Esophagus muscularis mucosa (tissue), 4 donors: ENCODE measurements at regions of chr11 and their contacts with region 1.

Region 1: DNA sequence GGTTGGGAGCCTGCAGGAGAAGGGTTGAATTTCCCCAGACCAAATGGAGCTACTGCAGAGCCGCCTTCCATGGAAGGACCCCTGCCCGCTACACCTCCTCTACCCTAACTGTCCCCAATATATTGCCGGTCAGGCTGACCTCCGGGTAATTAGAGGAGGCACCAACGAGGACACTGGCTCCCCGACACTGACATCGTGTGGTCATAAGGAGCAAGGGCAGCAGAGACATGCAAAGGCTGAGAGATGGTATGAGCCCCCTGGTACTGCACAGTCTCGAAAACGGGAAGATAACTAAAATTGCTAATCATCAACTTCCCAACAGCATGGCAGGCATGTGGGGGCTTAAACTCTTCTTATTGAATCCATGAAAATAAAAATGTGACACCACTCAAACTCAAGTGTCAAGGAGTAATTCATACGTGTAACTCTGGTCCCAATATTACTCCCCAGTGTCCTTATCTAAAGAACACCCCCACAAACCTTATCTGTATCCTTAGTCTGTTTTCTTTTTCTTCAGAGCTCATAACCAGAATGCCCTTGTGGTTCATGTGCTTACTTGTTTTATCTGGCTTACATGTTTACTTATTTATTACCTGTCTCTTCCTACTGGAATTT is 4.4 kb downstream of the CAVIN3 start:
- DNase-seq: no peak
- H3K4me3 ChIP-seq: peak overlapping the region in 3 of 4 donors; percentile 16 to 43 (median 20)
- H3K27ac ChIP-seq: peak overlapping the region in 3 of 4 donors; percentile 37 to 99 (median 98)
- H3K4me1 ChIP-seq: peaks cover 24 to 39% (median 38%) of the 10 kb centered on the region in 4 donors
- H3K27me3 ChIP-seq: no peaks in the 10 kb centered on the region
- CTCF ChIP-seq: peak; percentile 84 to 94 (median 84)
- EP300 ChIP-seq: no peak
- POLR2A ChIP-seq: no peak

Region 2: GRCh38 chr11:6234387-6235107 is 81.4 kb before region 1 on chr11 and contains the start of gene FHIP1B:
- intact Hi-C with region 1: loop called (anchors 5 kb)
- DNase-seq: peak; percentile 100
- H3K4me3 ChIP-seq: peak within 1 kb of the TSS; percentile 68 to 93 (median 74)
- H3K27ac ChIP-seq: peak within 1 kb of the TSS; percentile 82 to 92 (median 89)
- H3K4me1 ChIP-seq: peaks cover 9 to 36% (median 32%) of the 10 kb centered on the region in 4 donors
- H3K27me3 ChIP-seq: no peaks in the 10 kb centered on the region
- CTCF ChIP-seq: no peak
- EP300 ChIP-seq: no peak
- POLR2A ChIP-seq: peak; percentile 31
- total RNA-seq, gene FHIP1B: 22.6 to 39.3 (median 30.1) TPM

Region 3: DNA sequence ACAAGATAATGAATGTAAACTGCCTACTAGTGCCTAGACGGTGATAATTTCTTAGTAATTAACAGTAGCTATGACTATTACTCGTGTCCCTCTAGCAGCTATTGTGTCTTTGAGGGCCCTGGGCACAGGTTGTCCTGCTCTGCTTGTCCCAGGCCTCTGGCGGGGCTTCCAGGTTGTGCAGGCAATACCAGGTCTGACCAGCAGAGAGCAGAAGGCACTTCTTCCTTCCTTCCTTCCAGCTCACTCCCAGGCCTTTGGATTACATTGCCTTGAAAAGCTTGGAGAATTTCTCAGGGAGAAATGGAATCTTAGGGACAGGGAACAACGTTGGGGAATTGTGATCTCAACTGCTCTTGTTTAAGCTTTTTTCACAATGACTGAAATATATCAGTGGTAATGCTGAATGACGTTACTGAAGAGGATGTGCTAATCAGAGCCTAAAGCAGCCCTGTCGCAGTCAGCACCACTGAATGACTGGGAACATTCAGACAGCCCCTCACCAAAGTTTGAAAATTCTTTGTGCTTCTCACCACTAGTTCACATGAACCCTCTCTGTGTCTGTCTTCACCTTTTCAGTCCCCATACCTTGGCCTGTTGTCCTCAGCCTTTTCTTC is 64.7 kb before region 1 on chr11:
- intact Hi-C with region 1: loop called (anchors 5 kb)
- DNase-seq: no peak
- H3K4me3 ChIP-seq: no peak overlapping the region
- H3K27ac ChIP-seq: peak overlapping the region; percentile 37 to 56 (median 49)
- H3K4me1 ChIP-seq: peaks cover 5 to 10% (median 7%) of the 10 kb centered on the region in 4 donors
- H3K27me3 ChIP-seq: peaks cover 0 to under 1% (median 0%) of the 10 kb centered on the region in 4 donors
- CTCF ChIP-seq: peak; percentile 74 to 97 (median 81)
- EP300 ChIP-seq: no peak
- POLR2A ChIP-seq: no peak

Region 4: GRCh38 chr11:6505577-6506240 is 189.8 kb after region 1 on chr11:
- intact Hi-C with region 1: no loop called
- DNase-seq: no peak
- H3K4me3 ChIP-seq: no peak overlapping the region
- H3K27ac ChIP-seq: peak overlapping the region in 1 of 4 donors; percentile 33
- H3K4me1 ChIP-seq: peaks cover 0 to 8% (median 0%) of the 10 kb centered on the region in 4 donors
- H3K27me3 ChIP-seq: no peaks in the 10 kb centered on the region
- CTCF ChIP-seq: peak; percentile 62 to 81 (median 64)
- EP300 ChIP-seq: no peak
- POLR2A ChIP-seq: no peak